HCT116 (cell line): ENCODE measurements at regions of chr11 and their contacts with region 1.

Region 1: DNA sequence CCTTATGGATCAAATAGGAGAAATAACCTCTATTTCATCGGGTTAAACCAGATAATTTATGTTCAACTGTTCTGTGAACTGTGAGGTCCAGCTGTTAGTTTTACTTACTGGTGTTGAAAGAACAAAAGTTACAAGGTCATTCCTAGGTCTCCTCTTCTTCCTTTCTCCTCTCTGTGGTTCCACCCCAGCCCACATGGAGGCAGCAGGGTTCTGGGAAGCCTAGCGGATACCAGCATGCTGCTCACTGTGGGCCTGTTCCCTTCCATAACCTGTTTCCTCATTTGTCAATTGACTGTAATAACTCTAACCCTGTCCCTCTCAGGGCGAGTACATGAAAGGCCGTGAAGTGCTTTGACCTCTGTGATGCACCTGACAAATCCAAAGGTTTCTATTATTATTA is 27.8 kb downstream of the RELT start:
- DNase-seq: peak; percentile 28
- ATAC-seq: peak; percentile 85
- H3K4me3 ChIP-seq: no peak overlapping the region
- H3K27ac ChIP-seq: no peak overlapping the region
- H3K4me1 ChIP-seq: no peaks in the 10 kb centered on the region
- H3K27me3 ChIP-seq: no peaks in the 10 kb centered on the region
- CTCF ChIP-seq: peak; percentile 63 to 76 (median 70)
- POLR2A ChIP-seq: no peak
- RAD21 ChIP-seq: peak; percentile 78

Region 2: GRCh38 chr11:73177778-73178577 is 226.1 kb before region 1 on chr11:
- CTCF ChIA-PET with region 1: no interaction called
- POLR2A ChIA-PET with region 1: no interaction called
- RAD21 ChIA-PET with region 1: no interaction called
- intact Hi-C with region 1: no loop called
- DNase-seq: peak; percentile 42
- ATAC-seq: peak; percentile 99
- H3K4me3 ChIP-seq: no peak overlapping the region
- H3K27ac ChIP-seq: no peak overlapping the region
- H3K4me1 ChIP-seq: peaks cover 0 to 11% of the 10 kb centered on the region in 2 experiments; a peak in 1 of 4 replicates
- H3K27me3 ChIP-seq: no peaks in the 10 kb centered on the region
- CTCF ChIP-seq: peak; percentile 75 to 91 (median 86)
- POLR2A ChIP-seq: no peak
- RAD21 ChIP-seq: peak; percentile 99

Region 3: DNA sequence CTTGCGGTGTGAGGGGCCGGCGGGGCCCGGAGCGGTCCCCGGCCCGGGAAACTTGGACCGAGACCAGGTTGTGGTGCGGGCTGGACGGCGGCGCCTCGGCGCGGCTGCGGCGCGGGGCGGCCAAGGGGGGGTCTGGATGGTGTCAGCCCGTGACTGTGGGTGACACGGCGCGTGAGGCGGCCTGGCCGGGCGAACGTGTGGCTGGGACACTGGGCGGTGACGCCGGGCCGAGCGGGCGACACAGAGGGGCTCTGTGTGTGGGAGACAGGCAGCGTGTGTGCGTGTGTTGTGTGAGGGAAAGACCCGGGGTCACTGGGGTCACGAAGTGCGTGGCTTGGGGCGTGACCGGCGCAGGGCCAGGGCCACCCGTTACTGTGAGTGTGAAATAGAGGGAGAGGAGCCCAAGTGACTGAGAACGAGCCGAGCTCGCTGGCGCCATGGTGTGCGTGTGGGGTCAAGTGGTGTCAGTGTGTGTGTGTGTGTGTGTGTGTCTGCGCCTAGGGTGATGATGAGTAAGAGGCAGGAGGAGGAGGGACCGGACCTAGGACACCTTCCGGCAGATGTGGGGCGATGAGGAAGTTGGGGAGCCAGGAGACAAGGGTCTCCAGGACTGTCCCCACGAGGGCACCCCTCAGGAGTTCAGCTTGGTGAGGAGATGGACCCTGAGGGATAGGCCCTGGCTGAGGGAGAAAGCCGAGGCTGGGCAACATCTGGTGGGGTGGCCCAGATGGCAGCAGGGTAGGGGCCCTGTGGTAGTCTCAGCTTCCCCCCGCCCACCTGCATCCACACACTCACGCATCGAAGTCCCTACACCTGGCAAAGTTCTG is 27.0 kb before region 1 on chr11:
- CTCF ChIA-PET with region 1: no interaction called
- POLR2A ChIA-PET with region 1: no interaction called
- RAD21 ChIA-PET with region 1: no interaction called
- intact Hi-C with region 1: no loop called
- DNase-seq: peak; percentile 40
- ATAC-seq: peak; percentile 39
- H3K4me3 ChIP-seq: peak overlapping the region; percentile 87 to 97
- H3K27ac ChIP-seq: peak overlapping the region; percentile 88
- H3K4me1 ChIP-seq: peaks cover 6 to 30% of the 10 kb centered on the region in 2 experiments; a peak in 3 of 4 replicates
- H3K27me3 ChIP-seq: no peaks in the 10 kb centered on the region
- CTCF ChIP-seq: no peak
- POLR2A ChIP-seq: no peak
- RAD21 ChIP-seq: no peak

Region 4: DNA sequence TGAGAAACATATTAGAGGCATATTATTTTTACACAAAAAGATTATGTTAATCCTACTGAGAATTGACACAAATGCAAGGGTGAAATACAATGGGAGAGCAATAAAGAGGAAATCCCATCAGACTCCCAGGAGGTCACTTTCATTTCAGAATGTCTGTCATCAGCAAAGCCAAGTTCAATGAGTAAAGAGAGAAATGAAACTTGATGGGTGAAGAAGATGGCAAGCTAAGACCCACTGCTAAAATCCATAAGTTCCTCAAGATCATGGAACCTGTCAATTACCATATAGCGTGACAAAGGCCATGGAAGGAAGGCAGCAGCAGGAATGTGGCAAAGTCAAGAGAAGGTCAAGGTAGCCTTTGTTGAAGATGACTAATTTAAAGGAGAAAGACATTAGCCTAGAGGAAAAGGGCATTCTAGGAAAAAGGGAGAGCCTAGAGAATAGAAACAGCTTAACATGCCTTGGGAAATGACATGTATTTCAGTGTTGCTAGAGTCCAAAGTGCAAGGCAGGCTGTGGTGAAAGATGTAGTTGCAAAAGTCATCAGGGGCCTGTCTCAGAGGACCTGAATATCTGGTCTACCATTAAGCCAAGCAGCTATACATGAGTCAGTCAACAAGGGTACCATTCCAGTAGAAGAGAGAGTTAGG is 150.7 kb after region 1 on chr11:
- CTCF ChIA-PET with region 1: no interaction called
- POLR2A ChIA-PET with region 1: no interaction called
- RAD21 ChIA-PET with region 1: no interaction called
- intact Hi-C with region 1: no loop called
- DNase-seq: no peak
- ATAC-seq: no peak
- H3K4me3 ChIP-seq: no peak overlapping the region
- H3K27ac ChIP-seq: no peak overlapping the region
- H3K4me1 ChIP-seq: peaks cover 0 to 7% of the 10 kb centered on the region in 2 experiments; a peak in 2 of 4 replicates
- H3K27me3 ChIP-seq: no peaks in the 10 kb centered on the region
- CTCF ChIP-seq: no peak
- POLR2A ChIP-seq: no peak
- RAD21 ChIP-seq: no peak

Region 5: DNA sequence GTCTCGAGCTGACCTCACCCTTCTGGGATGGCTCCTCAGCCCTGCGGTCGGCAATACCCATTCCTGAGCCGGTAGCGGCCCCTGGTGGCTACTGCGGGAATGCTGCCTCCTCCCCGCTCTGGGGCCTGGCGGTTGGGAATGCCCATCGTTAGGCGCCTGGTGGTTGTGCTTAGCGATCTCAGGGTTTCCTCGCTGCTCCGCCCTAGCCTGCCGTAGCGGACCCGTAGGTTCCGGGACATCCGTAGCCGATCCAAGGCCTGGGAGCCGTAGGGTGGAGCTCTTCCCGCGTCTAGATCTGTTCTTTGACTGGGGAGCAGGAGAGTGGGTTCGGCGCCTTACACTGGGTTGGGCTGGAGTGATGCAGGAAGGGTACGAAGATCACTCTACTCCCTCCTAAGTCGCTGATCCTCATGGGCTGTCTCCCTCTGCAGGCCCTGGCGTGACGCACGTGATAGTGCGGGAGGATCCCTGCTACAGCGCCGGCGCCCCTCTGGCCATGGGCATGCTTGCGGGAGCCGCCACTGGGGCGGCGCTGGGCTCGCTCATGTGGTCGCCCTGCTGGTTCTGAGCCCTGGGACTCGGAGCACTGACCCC is 257.1 kb after region 1 on chr11:
- CTCF ChIA-PET with region 1: interaction called, 8 read pairs
- POLR2A ChIA-PET with region 1: no interaction called
- RAD21 ChIA-PET with region 1: interaction called in 1 of 2 experiments, 6 read pairs
- intact Hi-C with region 1: loop called (anchors 1 kb)
- DNase-seq: peak; percentile 43
- ATAC-seq: peak; percentile 96
- H3K4me3 ChIP-seq: no peak overlapping the region
- H3K27ac ChIP-seq: peak overlapping the region; percentile 12; the same call in 1 of the 2 replicates
- H3K4me1 ChIP-seq: peaks cover 5 to 20% of the 10 kb centered on the region in 2 experiments
- H3K27me3 ChIP-seq: no peaks in the 10 kb centered on the region
- CTCF ChIP-seq: peak; percentile 92 to 95 (median 92)
- POLR2A ChIP-seq: no peak
- RAD21 ChIP-seq: peak; percentile 99